ENCODE measurements at regions of chr1 and their contacts with region 1.

Region 1: DNA sequence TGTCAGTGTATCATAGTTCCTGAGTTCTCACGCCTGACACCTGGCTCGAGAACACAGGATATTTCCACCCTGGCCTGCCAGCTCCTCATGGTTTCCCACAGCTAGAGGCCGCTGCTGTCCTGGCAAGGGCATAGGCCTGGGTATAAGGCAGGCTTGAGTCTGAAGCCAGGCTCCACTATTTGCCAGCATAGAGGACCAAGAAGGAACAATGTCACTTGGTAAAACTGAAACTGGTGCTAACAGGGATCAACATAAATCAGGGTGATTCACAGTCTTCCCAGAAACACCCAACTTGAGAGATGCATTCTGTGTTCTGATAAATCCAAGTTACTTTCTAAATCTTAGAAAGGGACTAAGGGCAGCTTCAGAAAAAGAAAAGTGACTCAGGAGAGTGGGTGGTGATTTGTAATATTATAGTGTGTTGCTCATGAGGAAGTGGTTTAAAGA is 6.9 kb upstream of the S100A2 start:
- DNase-seq: peak; percentile 86 to 89 (median 88)
- ATAC-seq: peak; percentile 90 to 98 (median 97)
- H3K4me3 ChIP-seq: no peak overlapping the region
- H3K27ac ChIP-seq: no peak overlapping the region
- H3K4me1 ChIP-seq: peaks cover 0 to 7% (median 1%) of the 10 kb centered on the region in 4 donors
- H3K27me3 ChIP-seq: no peaks in the 10 kb centered on the region
- CTCF ChIP-seq: peak; percentile 89 to 95 (median 92)
- POLR2A ChIP-seq: no peak

Region 2: GRCh38 chr1:153510984-153511410 is 61.6 kb before region 1 on chr1:
- intact Hi-C with region 1: loop called (anchors 5 to 10 kb)
- DNase-seq: peak; percentile 80 to 84 (median 83)
- ATAC-seq: peak; percentile 80 to 90 (median 86)
- H3K4me3 ChIP-seq: no peak overlapping the region
- H3K27ac ChIP-seq: no peak overlapping the region
- H3K4me1 ChIP-seq: peaks cover 0 to 8% (median 2%) of the 10 kb centered on the region in 4 donors
- H3K27me3 ChIP-seq: no peaks in the 10 kb centered on the region
- CTCF ChIP-seq: peak; percentile 78 to 90 (median 83)
- POLR2A ChIP-seq: no peak

Region 3: GRCh38 chr1:153649863-153650235 is 77.3 kb after region 1 on chr1:
- intact Hi-C with region 1: loop called in 1 of 2 experiments (anchors 10 kb)
- DNase-seq: peak; percentile 84 to 93 (median 93)
- ATAC-seq: peak; percentile 90 to 94 (median 93)
- H3K4me3 ChIP-seq: no peak overlapping the region
- H3K27ac ChIP-seq: no peak overlapping the region
- H3K4me1 ChIP-seq: peaks cover 0 to 13% (median 6%) of the 10 kb centered on the region in 4 donors
- H3K27me3 ChIP-seq: no peaks in the 10 kb centered on the region
- CTCF ChIP-seq: no peak
- POLR2A ChIP-seq: no peak

Measured in right lobe of liver (tissue), 6 donors.